ENCODE measurements at regions of chr19 and their contacts with region 1.

Region 1: GRCh38 chr19:2096480-2097329 is at the start of gene IZUMO4:
- DNase-seq: peak; percentile 98 to 100 (median 99)
- ATAC-seq: peak; percentile 90
- H3K4me3 ChIP-seq: peak within 1 kb of the TSS; percentile 82
- H3K4me3 Mint-ChIP-seq: peak within 1 kb of the TSS; percentile 95 to 98 (median 97)
- H3K27ac ChIP-seq: peak within 1 kb of the TSS; percentile 88
- H3K27ac Mint-ChIP-seq: peak within 1 kb of the TSS; percentile 90 to 98 (median 94)
- H3K4me1 ChIP-seq: peaks cover 13% of the 10 kb centered on the region in 2 donors
- H3K4me1 Mint-ChIP-seq: peaks cover 15 to 37% (median 27%) of the 10 kb centered on the region in 7 donors
- H3K27me3 ChIP-seq: no peaks in the 10 kb centered on the region
- H3K27me3 Mint-ChIP-seq: no peaks in the 10 kb centered on the region
- total RNA-seq, gene IZUMO4: 12.2 to 26.8 (median 15.7) TPM

Region 2: DNA sequence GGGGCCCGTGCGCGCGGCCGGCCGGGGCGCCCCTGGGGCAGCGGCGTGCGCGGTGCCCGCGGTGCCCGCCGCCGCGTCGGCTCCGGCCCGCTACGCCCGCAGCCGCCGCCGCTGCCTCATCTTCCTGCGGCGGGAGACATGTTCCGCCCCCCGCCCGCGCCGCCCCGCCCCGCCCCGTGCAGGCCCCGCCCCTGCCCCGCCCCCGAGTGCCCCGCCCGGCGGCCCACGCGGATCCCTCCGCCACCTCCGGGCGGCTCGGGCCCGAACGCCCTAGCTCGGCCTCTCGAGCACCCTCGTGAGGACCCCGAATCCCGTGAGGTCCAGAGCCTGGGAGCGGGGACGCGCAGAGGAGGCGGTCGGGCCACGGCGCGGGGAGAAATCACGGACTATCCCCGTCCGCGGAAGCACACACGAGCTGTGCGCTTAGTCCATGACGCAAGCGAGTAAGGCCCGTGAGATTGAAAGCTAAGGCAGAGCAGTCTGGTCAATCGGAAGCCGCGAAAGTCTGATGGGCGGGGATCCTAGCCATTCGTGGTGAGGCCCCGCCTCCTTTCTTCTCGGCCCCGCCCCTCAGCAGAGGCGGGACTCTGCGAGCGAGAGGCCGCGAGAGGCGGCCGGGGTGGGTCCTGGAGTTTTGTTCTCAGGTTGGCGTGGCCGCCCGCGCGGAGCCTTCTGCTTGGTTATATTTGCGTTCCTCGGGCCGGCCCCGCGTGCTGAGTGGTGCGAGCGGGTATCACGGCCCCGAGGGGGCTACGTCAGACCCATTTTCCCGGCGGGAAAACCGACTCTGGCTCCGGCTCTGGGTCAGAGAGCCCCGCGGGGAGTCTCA is 444.0 kb before region 1 on chr19 and contains the start of gene TCF3:
- CTCF ChIA-PET with region 1: no interaction called
- POLR2A ChIA-PET with region 1: no interaction called
- intact Hi-C with region 1: loop called in 1 of 2 experiments (anchors 2 kb)
- DNase-seq: peak; percentile 96 to 100 (median 99)
- ATAC-seq: peak; percentile 96
- H3K4me3 ChIP-seq: peak within 1 kb of the TSS; percentile 86
- H3K4me3 Mint-ChIP-seq: peak within 1 kb of the TSS; percentile 86 to 96 (median 91)
- H3K27ac ChIP-seq: peak within 1 kb of the TSS; percentile 99
- H3K27ac Mint-ChIP-seq: peak within 1 kb of the TSS; percentile 87 to 98 (median 95)
- H3K4me1 ChIP-seq: peaks cover 4 to 8% of the 10 kb centered on the region in 2 donors
- H3K4me1 Mint-ChIP-seq: peaks cover 7 to 14% (median 10%) of the 10 kb centered on the region in 7 donors
- H3K27me3 ChIP-seq: no peaks in the 10 kb centered on the region
- H3K27me3 Mint-ChIP-seq: peaks cover 0 to 4% (median 0%) of the 10 kb centered on the region in 5 donors
- total RNA-seq, gene TCF3: 66.6 to 83.6 (median 78.3) TPM

Region 3: GRCh38 chr19:1807722-1808397 is 288.8 kb before region 1 on chr19:
- CTCF ChIA-PET with region 1: no interaction called
- POLR2A ChIA-PET with region 1: no interaction called
- intact Hi-C with region 1: no loop called
- DNase-seq: no peak
- ATAC-seq: no peak
- H3K4me3 ChIP-seq: no peak overlapping the region
- H3K4me3 Mint-ChIP-seq: no peak overlapping the region
- H3K27ac ChIP-seq: no peak overlapping the region
- H3K27ac Mint-ChIP-seq: no peak overlapping the region
- H3K4me1 ChIP-seq: peaks cover 0 to 3% of the 10 kb centered on the region in 2 donors
- H3K4me1 Mint-ChIP-seq: peaks cover 5 to 15% (median 6%) of the 10 kb centered on the region in 7 donors
- H3K27me3 ChIP-seq: no peaks in the 10 kb centered on the region
- H3K27me3 Mint-ChIP-seq: no peaks in the 10 kb centered on the region

Region 4: GRCh38 chr19:1905071-1905862 is 191.4 kb before region 1 on chr19 and contains the starts of genes ADAT3 and SCAMP4:
- CTCF ChIA-PET with region 1: interaction called, 3 read pairs
- POLR2A ChIA-PET with region 1: no interaction called
- intact Hi-C with region 1: loop called in 1 of 2 experiments (anchors 1 kb)
- DNase-seq: peak; percentile 90 to 98 (median 97)
- ATAC-seq: peak; percentile 98
- H3K4me3 ChIP-seq: peak within 1 kb of the TSS; percentile 70
- H3K4me3 Mint-ChIP-seq: peak within 1 kb of the TSS; percentile 88 to 96 (median 92)
- H3K27ac ChIP-seq: peak within 1 kb of the TSS; percentile 75
- H3K27ac Mint-ChIP-seq: peak within 1 kb of the TSS; percentile 67 to 96 (median 92)
- H3K4me1 ChIP-seq: peaks cover 10% of the 10 kb centered on the region in 2 donors
- H3K4me1 Mint-ChIP-seq: peaks cover 13 to 57% (median 39%) of the 10 kb centered on the region in 7 donors
- H3K27me3 ChIP-seq: no peaks in the 10 kb centered on the region
- H3K27me3 Mint-ChIP-seq: no peaks in the 10 kb centered on the region
- total RNA-seq, gene ADAT3: 3.5 to 13.5 (median 6.1) TPM
- total RNA-seq, gene SCAMP4: 17.6 to 35.5 (median 23.0) TPM

Region 5: GRCh38 chr19:2041683-2042484 is 54.8 kb before region 1 on chr19:
- CTCF ChIA-PET with region 1: no interaction called
- POLR2A ChIA-PET with region 1: interaction called, 11 read pairs
- intact Hi-C with region 1: loop called in 1 of 2 experiments (anchors 1 kb)
- DNase-seq: peak; percentile 98 to 100 (median 99)
- ATAC-seq: peak; percentile 91
- H3K4me3 ChIP-seq: peak overlapping the region; percentile 66
- H3K4me3 Mint-ChIP-seq: peak overlapping the region in 9 of 10 donors; percentile 27 to 79 (median 61)
- H3K27ac ChIP-seq: peak overlapping the region; percentile 97
- H3K27ac Mint-ChIP-seq: peak overlapping the region; percentile 69 to 96 (median 92)
- H3K4me1 ChIP-seq: peaks cover 26 to 48% of the 10 kb centered on the region in 2 donors
- H3K4me1 Mint-ChIP-seq: peaks cover 4 to 36% (median 23%) of the 10 kb centered on the region in 7 donors
- H3K27me3 ChIP-seq: no peaks in the 10 kb centered on the region
- H3K27me3 Mint-ChIP-seq: no peaks in the 10 kb centered on the region

Region 6: DNA sequence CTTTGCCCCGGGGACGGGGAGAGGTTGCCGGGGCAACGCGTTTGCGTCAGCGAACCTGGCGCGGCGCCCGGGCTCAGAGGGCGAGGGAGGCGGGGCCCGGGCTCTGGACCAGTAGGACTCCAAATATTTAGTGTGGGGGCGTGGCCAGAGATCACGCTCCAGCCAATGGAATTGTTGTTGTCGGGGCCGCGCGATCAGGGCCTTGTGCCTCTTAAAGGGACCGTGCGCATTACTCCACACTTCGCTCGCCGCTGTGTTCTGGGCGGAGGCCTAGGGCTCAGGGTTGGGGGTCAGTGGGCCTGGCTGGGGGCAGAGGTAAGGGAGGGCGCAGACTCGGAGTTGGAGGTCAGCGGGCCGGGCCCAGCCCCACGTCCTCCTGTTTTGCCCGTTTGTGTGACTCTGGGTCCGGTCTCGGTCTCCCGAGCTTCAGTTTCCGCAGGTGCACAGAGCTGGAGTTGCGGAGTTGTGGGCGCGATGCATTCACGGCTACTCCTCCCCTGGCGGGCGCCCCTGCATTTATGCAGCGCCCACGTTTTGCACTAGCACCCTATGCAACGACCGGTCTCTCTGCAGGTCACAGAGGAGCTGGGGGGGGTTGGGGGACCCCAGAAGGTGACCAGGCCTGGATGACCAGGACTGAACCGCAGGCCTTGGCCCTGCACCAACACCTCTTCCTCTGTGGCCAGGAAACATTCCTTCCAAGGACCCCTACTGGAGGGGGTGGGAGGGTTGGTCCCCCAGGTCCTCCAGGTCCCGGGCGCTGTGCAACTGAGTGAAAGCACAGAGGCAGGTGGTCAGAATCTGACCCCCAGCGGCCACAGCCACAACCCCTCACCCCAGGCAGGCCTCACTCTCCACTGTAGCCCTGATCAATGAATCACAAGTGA is 35.0 kb before region 1 on chr19:
- CTCF ChIA-PET with region 1: interaction called, 4 read pairs
- POLR2A ChIA-PET with region 1: interaction called, 7 read pairs
- intact Hi-C with region 1: loop called (anchors 1 kb)
- DNase-seq: peak; percentile 99 to 100 (median 100)
- ATAC-seq: peak; percentile 94
- H3K4me3 ChIP-seq: peak overlapping the region; percentile 72
- H3K4me3 Mint-ChIP-seq: peak overlapping the region; percentile 91 to 97 (median 94)
- H3K27ac ChIP-seq: peak overlapping the region; percentile 99
- H3K27ac Mint-ChIP-seq: peak overlapping the region; percentile 85 to 99 (median 97)
- H3K4me1 ChIP-seq: peaks cover 32 to 49% of the 10 kb centered on the region in 2 donors
- H3K4me1 Mint-ChIP-seq: peaks cover 20 to 60% (median 24%) of the 10 kb centered on the region in 7 donors
- H3K27me3 ChIP-seq: no peaks in the 10 kb centered on the region
- H3K27me3 Mint-ChIP-seq: no peaks in the 10 kb centered on the region

Region 7: DNA sequence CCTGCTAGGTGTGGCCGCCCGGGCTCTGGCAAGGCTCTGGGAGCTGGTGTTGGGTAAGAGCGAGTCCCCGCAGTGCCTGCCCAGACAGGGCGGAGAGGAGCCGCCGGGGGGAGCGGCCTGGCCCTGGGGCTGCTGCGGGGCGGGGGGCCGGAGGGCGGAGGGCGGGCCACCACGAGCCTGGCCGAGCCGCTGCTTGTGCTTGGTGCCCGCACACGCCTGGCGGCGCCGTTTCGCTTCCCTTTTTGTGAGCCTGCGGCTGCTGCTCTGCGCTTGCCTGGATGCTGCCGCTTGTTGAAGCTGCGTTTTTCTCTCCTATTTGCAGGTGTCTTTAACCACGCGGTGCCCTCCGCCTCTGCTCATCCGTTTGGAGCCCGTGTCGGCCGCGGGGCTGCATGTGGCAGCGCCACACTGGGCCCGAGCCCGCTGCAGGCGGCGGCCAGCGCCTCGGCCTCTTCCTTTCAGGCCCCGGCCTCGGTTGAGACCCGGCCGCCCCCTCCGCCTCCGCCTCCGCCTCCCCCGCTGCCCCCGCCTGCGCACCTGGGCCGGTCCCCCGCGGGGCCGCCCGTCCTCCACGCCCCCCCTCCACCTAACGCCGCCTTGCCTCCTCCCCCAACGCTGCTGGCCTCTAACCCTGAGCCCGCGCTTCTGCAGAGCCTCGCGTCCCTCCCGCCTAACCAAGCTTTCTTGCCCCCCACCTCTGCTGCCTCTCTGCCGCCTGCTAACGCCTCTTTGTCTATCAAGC is 130.9 kb after region 1 on chr19:
- CTCF ChIA-PET with region 1: no interaction called
- POLR2A ChIA-PET with region 1: no interaction called
- intact Hi-C with region 1: no loop called
- DNase-seq: no peak
- ATAC-seq: peak; percentile 33
- H3K4me3 ChIP-seq: no peak overlapping the region
- H3K4me3 Mint-ChIP-seq: no peak overlapping the region
- H3K27ac ChIP-seq: no peak overlapping the region
- H3K27ac Mint-ChIP-seq: no peak overlapping the region
- H3K4me1 ChIP-seq: peaks cover 0 to 6% of the 10 kb centered on the region in 2 donors
- H3K4me1 Mint-ChIP-seq: peaks cover 0 to 4% (median 0%) of the 10 kb centered on the region in 7 donors
- H3K27me3 ChIP-seq: no peaks in the 10 kb centered on the region
- H3K27me3 Mint-ChIP-seq: no peaks in the 10 kb centered on the region

Region 8: DNA sequence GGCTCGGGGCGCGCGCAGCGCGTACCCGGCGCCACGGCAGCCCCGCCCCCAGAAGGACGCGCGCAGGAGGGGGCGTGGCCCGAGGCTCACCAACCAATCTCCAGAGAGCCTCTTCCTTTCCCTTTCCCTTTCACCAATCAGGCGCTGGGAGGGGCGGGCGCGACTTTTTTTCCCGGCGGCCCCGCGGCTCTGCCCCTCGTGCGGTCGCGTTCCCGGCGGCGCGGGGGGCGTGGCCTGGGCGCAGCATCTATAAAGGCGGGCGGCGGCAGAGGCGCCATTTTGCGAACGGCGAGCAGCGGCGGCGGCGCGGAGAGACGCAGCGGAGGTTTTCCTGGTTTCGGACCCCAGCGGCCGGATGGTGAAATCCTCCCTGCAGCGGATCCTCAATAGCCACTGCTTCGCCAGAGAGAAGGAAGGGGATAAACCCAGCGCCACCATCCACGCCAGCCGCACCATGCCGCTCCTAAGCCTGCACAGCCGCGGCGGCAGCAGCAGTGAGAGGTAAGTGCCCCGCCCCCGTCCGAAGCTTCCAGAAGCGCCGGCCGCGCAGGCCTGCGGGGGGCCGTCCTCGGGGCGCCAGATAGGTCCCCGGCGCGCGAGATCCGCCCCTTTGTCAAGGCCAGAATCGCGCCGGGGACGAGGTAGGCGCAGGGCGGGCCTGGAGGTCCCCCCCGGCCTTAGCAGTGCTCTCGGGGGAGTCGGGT is 172.7 kb after region 1 on chr19:
- CTCF ChIA-PET with region 1: interaction called, 3 read pairs
- POLR2A ChIA-PET with region 1: interaction called, 3 read pairs
- intact Hi-C with region 1: loop called in 1 of 2 experiments (anchors 1 kb)
- DNase-seq: peak; percentile 98 to 100 (median 99)
- ATAC-seq: peak; percentile 90
- H3K4me3 ChIP-seq: peak overlapping the region; percentile 96
- H3K4me3 Mint-ChIP-seq: peak overlapping the region; percentile 86 to 96 (median 90)
- H3K27ac ChIP-seq: peak overlapping the region; percentile 87
- H3K27ac Mint-ChIP-seq: peak overlapping the region; percentile 72 to 94 (median 89)
- H3K4me1 ChIP-seq: peaks cover 32 to 34% of the 10 kb centered on the region in 2 donors
- H3K4me1 Mint-ChIP-seq: peaks cover 28 to 52% (median 35%) of the 10 kb centered on the region in 7 donors
- H3K27me3 ChIP-seq: no peaks in the 10 kb centered on the region
- H3K27me3 Mint-ChIP-seq: no peaks in the 10 kb centered on the region